ENCODE measurements at regions of chr14 and their contacts with region 1.

Region 1: GRCh38 chr14:106134886-106135285 is 608.5 kb downstream of the TMEM121 start:
- DNase-seq: no peak
- ATAC-seq: no peak
- H3K4me3 ChIP-seq: no peak overlapping the region
- H3K27ac ChIP-seq: no peak overlapping the region
- H3K4me1 ChIP-seq: no peaks in the 10 kb centered on the region
- H3K27me3 ChIP-seq: no peaks in the 10 kb centered on the region
- CTCF ChIP-seq: no peak
- EP300 ChIP-seq: no peak
- POLR2A ChIP-seq: no peak
- RAD21 ChIP-seq: no peak

Region 2: DNA sequence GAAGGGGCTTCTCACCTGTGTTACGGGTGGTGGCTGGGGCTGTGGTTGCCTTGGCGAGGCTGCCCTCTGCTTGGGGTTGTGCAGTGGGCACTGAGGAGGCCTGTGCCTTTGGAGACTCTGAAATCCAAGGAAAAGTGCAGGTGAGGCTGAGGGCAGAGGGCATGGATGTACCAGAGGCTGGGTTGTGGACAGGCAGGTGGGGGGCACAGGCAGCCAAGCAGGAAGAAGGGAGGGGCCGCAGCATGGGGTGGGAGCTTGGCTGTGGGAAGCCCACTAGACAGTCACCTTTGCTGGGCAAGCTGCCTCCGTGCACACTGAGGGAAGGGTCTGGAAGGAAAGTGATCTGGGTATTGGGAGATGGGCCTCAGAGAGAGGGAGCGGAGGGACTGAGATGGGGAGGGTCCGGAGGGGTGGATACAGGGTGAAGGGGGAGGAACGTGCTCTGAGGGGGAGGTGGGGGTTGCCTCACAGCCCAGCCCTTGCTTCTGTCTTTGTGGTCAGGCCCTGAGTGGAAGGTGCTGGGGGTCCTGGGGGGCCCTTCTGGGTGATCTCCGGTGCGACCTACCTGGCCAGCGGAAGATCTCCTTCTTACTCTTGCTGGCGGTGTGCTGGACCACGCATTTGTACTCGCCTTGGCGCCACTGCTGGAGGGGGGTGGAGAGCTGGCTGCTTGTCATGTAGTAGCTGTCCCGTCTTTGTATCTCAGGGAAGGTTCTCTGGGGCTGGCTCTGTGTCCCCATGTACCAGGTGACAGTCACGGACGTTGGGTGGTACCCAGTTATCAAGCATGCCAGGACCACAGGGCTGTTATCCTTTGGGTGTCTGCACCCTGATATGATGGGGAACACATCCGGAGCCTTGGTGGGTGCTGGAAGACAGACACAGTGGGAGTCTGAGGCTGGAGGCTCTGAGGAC is 289.8 kb before region 1 on chr14:
- CTCF ChIA-PET with region 1: no interaction called
- POLR2A ChIA-PET with region 1: no interaction called
- RAD21 ChIA-PET with region 1: no interaction called
- SMC1A ChIA-PET with region 1: no interaction called
- in situ Hi-C with region 1: no loop called
- intact Hi-C with region 1: loop called (anchors 5 kb)
- DNase-seq: no peak
- ATAC-seq: no peak
- H3K4me3 ChIP-seq: no peak overlapping the region
- H3K27ac ChIP-seq: no peak overlapping the region
- H3K4me1 ChIP-seq: no peaks in the 10 kb centered on the region
- H3K27me3 ChIP-seq: no peaks in the 10 kb centered on the region
- CTCF ChIP-seq: no peak
- EP300 ChIP-seq: no peak
- POLR2A ChIP-seq: no peak
- RAD21 ChIP-seq: no peak

Measured in GM12878 (cell line).